ENCODE measurements at regions of chr9 and their contacts with region 1.

Region 1: DNA sequence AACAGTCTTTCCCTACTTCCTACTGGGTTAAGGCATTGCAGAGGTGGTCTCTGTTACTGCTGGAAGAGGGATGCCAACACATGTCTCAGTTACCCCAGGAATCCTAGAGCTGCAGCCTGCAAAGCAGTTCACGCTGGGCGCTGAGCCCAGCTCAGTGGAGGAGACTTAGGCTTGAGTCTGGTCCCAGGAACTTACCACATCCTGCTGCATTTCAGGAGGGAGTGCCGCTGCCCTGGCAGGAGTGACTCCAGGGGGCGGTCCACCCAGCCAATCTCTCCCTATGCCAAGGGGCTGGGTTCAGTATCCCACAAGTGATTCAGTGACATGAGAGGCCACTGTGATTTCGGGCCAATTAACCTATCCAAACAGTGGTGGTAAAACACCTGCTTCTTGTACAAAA is 7.6 kb downstream of the TTC16 start:
- DNase-seq: no peak

Region 2: GRCh38 chr9:127611899-127612790 is 111.3 kb before region 1 on chr9 and contains the start of gene STXBP1:
- intact Hi-C with region 1: loop called in 1 of 2 experiments (anchors 5 kb)
- DNase-seq: peak; percentile 95
- total RNA-seq, gene STXBP1: 69.4 to 80.3 TPM